B cell (primary cell): ENCODE measurements at regions of chr5 and their contacts with region 1.

Region 1: GRCh38 chr5:178146020-178146820 is 7.5 kb downstream of the NHP2 start:
- DNase-seq: peak; percentile 85
- ATAC-seq: peak; percentile 93
- H3K4me3 ChIP-seq: no peak overlapping the region
- H3K4me3 Mint-ChIP-seq: no peak overlapping the region
- H3K27ac ChIP-seq: no peak overlapping the region
- H3K27ac Mint-ChIP-seq: no peak overlapping the region
- H3K4me1 ChIP-seq: no peaks in the 10 kb centered on the region
- H3K4me1 Mint-ChIP-seq: peaks cover 5% of the 10 kb centered on the region
- H3K27me3 ChIP-seq: no peaks in the 10 kb centered on the region
- H3K27me3 Mint-ChIP-seq: no peaks in the 10 kb centered on the region
- CTCF ChIP-seq: peak; percentile 79

Region 2: DNA sequence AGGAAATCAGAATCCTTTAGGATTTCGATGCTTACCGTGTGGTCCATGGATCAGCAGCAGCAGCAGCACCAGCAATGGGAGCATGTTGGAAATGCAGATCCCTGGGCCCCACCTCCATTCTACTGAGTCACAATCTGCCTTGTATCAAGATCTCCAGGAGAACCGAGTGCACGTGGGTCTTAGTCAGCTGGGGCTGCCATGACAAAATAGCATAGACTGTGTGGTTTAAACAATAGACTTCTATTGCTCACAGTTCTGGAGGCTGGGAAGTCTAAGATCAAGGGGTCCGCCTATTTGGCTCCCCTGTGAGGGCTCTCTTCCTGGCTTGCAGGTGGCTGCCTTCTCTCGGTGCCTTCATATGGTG is 148.9 kb before region 1 on chr5:
- CTCF ChIA-PET with region 1: no interaction called
- POLR2A ChIA-PET with region 1: no interaction called
- intact Hi-C with region 1: no loop called
- DNase-seq: no peak
- ATAC-seq: no peak
- H3K4me3 ChIP-seq: no peak overlapping the region
- H3K4me3 Mint-ChIP-seq: no peak overlapping the region
- H3K27ac ChIP-seq: no peak overlapping the region
- H3K27ac Mint-ChIP-seq: no peak overlapping the region
- H3K4me1 ChIP-seq: no peaks in the 10 kb centered on the region
- H3K4me1 Mint-ChIP-seq: no peaks in the 10 kb centered on the region
- H3K27me3 ChIP-seq: peaks cover 0 to 32% (median 4%) of the 10 kb centered on the region in 4 experiments
- H3K27me3 Mint-ChIP-seq: peaks cover 25% of the 10 kb centered on the region
- CTCF ChIP-seq: no peak

Region 3: DNA sequence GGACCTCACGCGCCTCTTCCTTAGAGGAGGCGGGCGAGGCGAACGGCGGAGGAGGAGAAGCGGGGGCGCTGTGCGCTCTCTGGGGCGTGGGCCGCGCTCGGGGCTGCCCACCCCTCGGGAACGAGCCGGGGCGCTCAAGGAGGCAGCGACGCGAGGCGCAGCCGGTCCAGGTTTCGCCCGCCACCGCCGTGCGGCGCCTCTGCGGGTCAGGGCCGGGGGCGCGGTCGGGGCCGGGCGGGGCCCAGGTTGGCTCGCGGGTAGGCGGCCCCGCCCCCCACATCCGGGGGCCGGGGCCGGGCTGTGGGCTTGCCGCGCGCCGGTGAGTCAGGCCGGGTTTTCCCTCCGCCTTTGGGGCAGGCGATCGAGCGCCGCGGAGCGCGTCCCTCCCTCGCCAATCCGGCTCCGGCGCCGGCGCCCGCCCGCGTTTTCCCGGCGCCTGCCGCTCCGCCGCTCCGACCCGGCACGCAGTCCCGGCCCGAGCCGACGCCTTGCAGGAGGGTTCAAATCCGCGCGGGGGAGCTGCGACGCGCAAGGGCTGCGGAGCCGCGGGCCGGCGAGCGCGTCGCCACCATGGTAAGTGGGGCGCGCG is 32.9 kb before region 1 on chr5 and contains the start of gene N4BP3:
- CTCF ChIA-PET with region 1: interaction called, 25 read pairs
- POLR2A ChIA-PET with region 1: interaction called, 3 read pairs
- intact Hi-C with region 1: no loop called
- DNase-seq: peak; percentile 91
- ATAC-seq: peak; percentile 63
- H3K4me3 ChIP-seq: peak within 1 kb of the TSS; percentile 26 to 85 (median 74)
- H3K4me3 Mint-ChIP-seq: peak within 1 kb of the TSS; percentile 94
- H3K27ac ChIP-seq: peak within 1 kb of the TSS; percentile 86 to 89
- H3K27ac Mint-ChIP-seq: peak within 1 kb of the TSS; percentile 93
- H3K4me1 ChIP-seq: peaks cover 55 to 62% of the 10 kb centered on the region in 2 donors
- H3K4me1 Mint-ChIP-seq: peaks cover 66% of the 10 kb centered on the region
- H3K27me3 ChIP-seq: no peaks in the 10 kb centered on the region
- H3K27me3 Mint-ChIP-seq: no peaks in the 10 kb centered on the region
- CTCF ChIP-seq: peak; percentile 25
- total RNA-seq, gene N4BP3: 47.2 and 48.7 TPM in 2 replicates

Region 4: GRCh38 chr5:178120868-178121357 is 25.3 kb before region 1 on chr5:
- CTCF ChIA-PET with region 1: interaction called, 50 read pairs
- POLR2A ChIA-PET with region 1: interaction called, 3 read pairs
- intact Hi-C with region 1: no loop called
- DNase-seq: peak; percentile 88
- ATAC-seq: peak; percentile 50
- H3K4me3 ChIP-seq: peak overlapping the region in 4 of 5 experiments; percentile 18 to 34 (median 32)
- H3K4me3 Mint-ChIP-seq: peak overlapping the region; percentile 82
- H3K27ac ChIP-seq: peak overlapping the region in 1 of 2 donors; percentile 26
- H3K27ac Mint-ChIP-seq: peak overlapping the region; percentile 88
- H3K4me1 ChIP-seq: peaks cover 65 to 68% of the 10 kb centered on the region in 2 donors
- H3K4me1 Mint-ChIP-seq: peaks cover 68% of the 10 kb centered on the region
- H3K27me3 ChIP-seq: no peaks in the 10 kb centered on the region
- H3K27me3 Mint-ChIP-seq: no peaks in the 10 kb centered on the region
- CTCF ChIP-seq: peak; percentile 80

Region 5: GRCh38 chr5:178130604-178131485 is 15.4 kb before region 1 on chr5 and contains the start of gene RMND5B:
- CTCF ChIA-PET with region 1: interaction called, 23 read pairs
- POLR2A ChIA-PET with region 1: interaction called, 5 read pairs
- intact Hi-C with region 1: loop called (anchors 2 kb)
- DNase-seq: peak; percentile 92
- ATAC-seq: peak; percentile 87
- H3K4me3 ChIP-seq: peak within 1 kb of the TSS; percentile 17 to 81 (median 78)
- H3K4me3 Mint-ChIP-seq: peak within 1 kb of the TSS; percentile 89
- H3K27ac ChIP-seq: peak within 1 kb of the TSS; percentile 60 to 83
- H3K27ac Mint-ChIP-seq: peak within 1 kb of the TSS; percentile 88
- H3K4me1 ChIP-seq: peaks cover 6 to 16% of the 10 kb centered on the region in 2 donors
- H3K4me1 Mint-ChIP-seq: peaks cover 22% of the 10 kb centered on the region
- H3K27me3 ChIP-seq: no peaks in the 10 kb centered on the region
- H3K27me3 Mint-ChIP-seq: no peaks in the 10 kb centered on the region
- CTCF ChIP-seq: no peak
- total RNA-seq, gene RMND5B: 52.7 and 53.9 TPM in 2 replicates

Region 6: GRCh38 chr5:178163772-178164735 is 17.8 kb after region 1 on chr5:
- CTCF ChIA-PET with region 1: interaction called, 7 read pairs
- POLR2A ChIA-PET with region 1: no interaction called
- intact Hi-C with region 1: loop called (anchors 1 kb)
- DNase-seq: peak; percentile 94
- ATAC-seq: peak; percentile 100
- H3K4me3 ChIP-seq: peak overlapping the region in 1 of 5 experiments; percentile 14
- H3K4me3 Mint-ChIP-seq: peak overlapping the region; percentile 17
- H3K27ac ChIP-seq: no peak overlapping the region
- H3K27ac Mint-ChIP-seq: peak overlapping the region; percentile 4
- H3K4me1 ChIP-seq: peaks cover 5 to 9% of the 10 kb centered on the region in 2 donors
- H3K4me1 Mint-ChIP-seq: peaks cover 16% of the 10 kb centered on the region
- H3K27me3 ChIP-seq: no peaks in the 10 kb centered on the region
- H3K27me3 Mint-ChIP-seq: peaks cover 11% of the 10 kb centered on the region
- CTCF ChIP-seq: peak; percentile 94